H1 (cell line): ENCODE measurements at regions of chr10 and their contacts with region 1.

Region 1: DNA sequence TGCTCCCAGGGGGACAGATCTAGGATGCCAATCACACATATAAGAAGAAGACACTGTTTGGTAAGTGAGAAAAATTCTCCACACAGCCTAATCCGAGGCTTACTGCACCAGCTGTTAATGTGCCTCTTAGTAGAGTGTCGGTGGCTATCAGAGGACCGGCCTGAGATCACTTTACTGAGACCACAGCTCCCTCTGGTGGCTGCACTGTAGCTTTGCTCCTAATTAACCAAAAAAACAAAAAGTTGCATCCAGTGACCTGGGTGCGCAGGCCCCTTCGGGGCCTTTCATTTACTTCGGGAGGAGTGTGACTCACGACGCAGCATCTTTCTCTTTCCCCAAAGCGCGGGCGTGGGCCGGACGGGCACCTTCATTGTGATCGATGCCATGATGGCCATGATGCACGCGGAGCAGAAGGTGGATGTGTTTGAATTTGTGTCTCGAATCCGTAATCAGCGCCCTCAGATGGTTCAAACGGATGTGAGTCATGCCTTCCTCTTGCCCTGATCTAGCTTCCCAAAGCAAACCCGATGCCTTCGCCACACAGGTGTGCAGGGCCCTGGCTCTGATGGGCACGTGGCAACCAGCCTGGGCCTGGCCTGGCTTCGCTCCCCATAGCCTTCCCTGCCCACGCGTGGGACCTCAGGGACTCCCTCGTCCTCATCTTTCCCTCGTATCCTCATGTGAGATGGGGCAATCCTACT is 56.7 kb downstream of the MKI67 start:
- DNase-seq: peak; percentile 19 to 86
- H3K4me3 ChIP-seq: no peak overlapping the region
- H3K27ac ChIP-seq: no peak overlapping the region
- H3K4me1 ChIP-seq: peaks cover 0 to 3% (median 0%) of the 10 kb centered on the region in 4 experiments; a peak in 1 of 7 replicates
- H3K27me3 ChIP-seq: 0 out of 7 replicates have a peak, but pooled peaks cover 0 to 2% (median 0%) of the 10 kb centered on the region in 4 experiments
- CTCF ChIP-seq: peak; percentile 55 to 88 (median 74)
- EP300 ChIP-seq: 0 out of 3 replicates have a peak, but pooled peaks of 1 of the 2 experiments have one; percentile 16
- POLR2A ChIP-seq: no peak
- RAD21 ChIP-seq: peak; percentile 92 to 95

Region 2: DNA sequence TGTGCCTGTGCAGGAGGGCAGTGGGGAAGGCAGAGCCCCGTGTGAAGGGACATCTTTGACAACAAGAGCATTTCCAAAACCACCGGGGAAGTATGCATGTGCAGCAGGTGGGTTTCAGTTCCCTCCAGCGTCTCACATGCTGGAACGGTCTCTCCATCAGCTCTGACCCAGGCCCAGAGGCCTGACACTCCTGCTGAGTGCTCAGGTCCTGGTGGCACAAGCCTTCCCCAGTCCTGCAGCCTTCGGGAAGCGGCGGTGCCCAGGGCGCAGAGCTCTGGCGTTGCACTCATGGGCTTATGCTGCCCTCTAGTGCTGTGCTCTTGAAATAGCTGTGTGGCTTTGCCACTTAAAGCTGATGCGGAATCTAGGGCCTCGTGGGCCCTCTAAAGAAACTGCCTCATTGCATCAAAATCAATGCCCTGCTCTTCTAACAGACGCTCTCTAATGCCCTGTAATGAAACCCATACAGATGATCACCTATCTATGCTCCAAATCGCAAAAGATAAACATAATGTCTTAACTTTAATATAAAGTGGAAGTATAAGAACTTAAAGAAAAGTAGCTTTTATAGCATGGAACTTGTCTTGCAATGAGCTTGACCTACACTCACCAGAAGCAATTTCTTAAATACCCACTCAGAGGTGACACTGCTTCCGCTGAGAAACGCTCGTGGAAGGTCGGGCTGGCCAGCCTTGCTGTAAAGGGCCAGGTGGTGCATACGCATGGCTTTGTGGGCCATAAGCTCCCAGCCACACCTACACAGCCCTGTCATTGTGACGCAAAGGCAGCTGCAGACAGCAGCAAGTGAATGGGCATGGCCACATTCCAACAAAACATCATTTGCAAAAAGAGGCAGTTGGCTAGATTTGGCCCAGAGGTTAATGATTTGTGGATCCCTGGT is 215.4 kb before region 1 on chr10:
- CTCF ChIA-PET with region 1: interaction called, 13 read pairs
- POLR2A ChIA-PET with region 1: no interaction called
- DNase-seq: peak; percentile 51 to 85
- H3K4me3 ChIP-seq: no peak overlapping the region
- H3K27ac ChIP-seq: no peak overlapping the region
- H3K4me1 ChIP-seq: peaks cover 0 to 5% (median 2%) of the 10 kb centered on the region in 4 experiments; a peak in 4 of 7 replicates
- H3K27me3 ChIP-seq: no peaks in the 10 kb centered on the region
- CTCF ChIP-seq: peak; percentile 77 to 93 (median 88)
- EP300 ChIP-seq: no peak
- POLR2A ChIP-seq: no peak
- RAD21 ChIP-seq: peak; percentile 99

Region 3: GRCh38 chr10:127906548-127907377 is 162.7 kb before region 1 on chr10 and contains the start of gene PTPRE:
- CTCF ChIA-PET with region 1: interaction called, 22 read pairs
- POLR2A ChIA-PET with region 1: no interaction called
- DNase-seq: peak; percentile 17 to 88
- H3K4me3 ChIP-seq: peak within 1 kb of the TSS; percentile 36 to 87 (median 54)
- H3K27ac ChIP-seq: no peak within 1 kb of the TSS
- H3K4me1 ChIP-seq: peaks cover 0 to 3% (median 1%) of the 10 kb centered on the region in 4 experiments; a peak in 5 of 7 replicates
- H3K27me3 ChIP-seq: peaks cover 3 to 23% (median 15%) of the 10 kb centered on the region in 4 experiments
- CTCF ChIP-seq: peak; percentile 72 to 94 (median 88)
- EP300 ChIP-seq: no peak
- POLR2A ChIP-seq: no peak
- RAD21 ChIP-seq: peak; percentile 67 to 91
- total RNA-seq, gene PTPRE: 0.54 and 0.69 TPM in 2 replicates

Region 4: GRCh38 chr10:128000471-128001362 is 68.8 kb before region 1 on chr10:
- CTCF ChIA-PET with region 1: no interaction called
- POLR2A ChIA-PET with region 1: no interaction called
- DNase-seq: no peak
- H3K4me3 ChIP-seq: no peak overlapping the region
- H3K27ac ChIP-seq: no peak overlapping the region
- H3K4me1 ChIP-seq: no peaks in the 10 kb centered on the region
- H3K27me3 ChIP-seq: no peaks in the 10 kb centered on the region
- CTCF ChIP-seq: no peak
- EP300 ChIP-seq: no peak
- POLR2A ChIP-seq: no peak
- RAD21 ChIP-seq: no peak

Region 5: GRCh38 chr10:128018236-128018635 is 51.3 kb before region 1 on chr10:
- CTCF ChIA-PET with region 1: interaction called, 18 read pairs
- POLR2A ChIA-PET with region 1: no interaction called
- DNase-seq: no peak
- H3K4me3 ChIP-seq: no peak overlapping the region
- H3K27ac ChIP-seq: no peak overlapping the region
- H3K4me1 ChIP-seq: 0 out of 7 replicates have a peak, but pooled peaks cover 0 to 2% (median 0%) of the 10 kb centered on the region in 4 experiments
- H3K27me3 ChIP-seq: no peaks in the 10 kb centered on the region
- CTCF ChIP-seq: no peak
- EP300 ChIP-seq: no peak
- POLR2A ChIP-seq: no peak
- RAD21 ChIP-seq: no peak

Region 6: DNA sequence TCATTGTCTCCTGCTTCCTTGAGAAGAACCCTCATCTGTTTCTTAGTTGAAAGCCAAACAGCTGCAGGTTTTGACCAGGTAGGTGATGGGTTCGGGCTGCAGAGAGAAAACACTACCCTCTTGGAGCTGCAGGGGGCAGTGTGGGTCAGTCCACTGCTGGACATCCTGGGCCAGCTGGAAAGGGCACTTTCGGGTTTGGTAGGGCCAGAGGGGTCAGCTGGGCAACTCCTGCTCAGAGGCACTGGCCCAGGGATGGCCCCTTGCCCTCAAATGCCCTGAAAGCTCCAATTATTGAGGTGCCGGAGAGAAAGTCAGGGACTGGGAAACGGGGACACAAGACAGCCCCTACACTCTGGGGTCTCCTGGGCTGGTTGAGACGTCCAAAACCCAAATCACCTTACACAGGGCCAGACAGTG is 33.9 kb before region 1 on chr10:
- CTCF ChIA-PET with region 1: interaction called, 52 read pairs
- POLR2A ChIA-PET with region 1: no interaction called
- DNase-seq: peak; percentile 23 to 95
- H3K4me3 ChIP-seq: no peak overlapping the region
- H3K27ac ChIP-seq: no peak overlapping the region
- H3K4me1 ChIP-seq: no peaks in the 10 kb centered on the region
- H3K27me3 ChIP-seq: no peaks in the 10 kb centered on the region
- CTCF ChIP-seq: peak; percentile 75 to 93 (median 90)
- EP300 ChIP-seq: no peak
- POLR2A ChIP-seq: no peak
- RAD21 ChIP-seq: peak; percentile 63 to 80

Region 7: DNA sequence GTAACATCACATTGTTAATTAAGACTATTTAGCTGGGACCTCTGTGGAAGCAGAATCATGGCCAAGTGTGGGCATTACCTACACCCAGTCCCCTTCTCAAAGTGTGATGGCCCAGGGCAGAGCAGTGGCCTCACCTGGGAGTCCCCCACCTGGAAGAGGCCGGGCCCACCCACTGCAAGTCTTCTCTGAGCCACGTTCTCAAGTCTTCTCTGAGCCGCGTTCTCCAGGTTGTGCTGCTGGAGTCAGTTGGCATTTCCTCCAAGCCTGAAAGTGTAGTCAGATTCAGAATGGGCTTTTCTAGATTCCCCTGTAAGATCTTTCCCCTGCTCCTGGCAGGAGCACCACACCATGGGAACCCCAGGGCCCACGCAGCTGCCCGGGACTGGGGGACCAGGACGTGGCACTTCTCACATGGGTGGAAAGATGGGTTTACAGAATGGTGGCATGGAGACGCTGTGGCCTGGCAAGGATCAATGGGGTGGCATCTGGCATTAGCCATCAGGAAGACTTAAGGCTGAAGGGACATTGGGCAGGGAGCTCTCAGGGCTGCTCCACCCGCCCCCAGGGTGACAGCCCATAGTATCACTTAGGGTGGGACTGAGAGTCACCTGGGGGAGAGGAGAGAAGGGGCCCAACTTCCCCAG is 11.3 kb before region 1 on chr10:
- CTCF ChIA-PET with region 1: interaction called, 21 read pairs
- POLR2A ChIA-PET with region 1: interaction called, 3 read pairs
- DNase-seq: no peak
- H3K4me3 ChIP-seq: no peak overlapping the region
- H3K27ac ChIP-seq: no peak overlapping the region
- H3K4me1 ChIP-seq: peaks cover 3 to 12% (median 10%) of the 10 kb centered on the region in 4 experiments; a peak in 6 of 7 replicates
- H3K27me3 ChIP-seq: no peaks in the 10 kb centered on the region
- CTCF ChIP-seq: no peak
- EP300 ChIP-seq: no peak
- POLR2A ChIP-seq: no peak
- RAD21 ChIP-seq: no peak

Region 8: DNA sequence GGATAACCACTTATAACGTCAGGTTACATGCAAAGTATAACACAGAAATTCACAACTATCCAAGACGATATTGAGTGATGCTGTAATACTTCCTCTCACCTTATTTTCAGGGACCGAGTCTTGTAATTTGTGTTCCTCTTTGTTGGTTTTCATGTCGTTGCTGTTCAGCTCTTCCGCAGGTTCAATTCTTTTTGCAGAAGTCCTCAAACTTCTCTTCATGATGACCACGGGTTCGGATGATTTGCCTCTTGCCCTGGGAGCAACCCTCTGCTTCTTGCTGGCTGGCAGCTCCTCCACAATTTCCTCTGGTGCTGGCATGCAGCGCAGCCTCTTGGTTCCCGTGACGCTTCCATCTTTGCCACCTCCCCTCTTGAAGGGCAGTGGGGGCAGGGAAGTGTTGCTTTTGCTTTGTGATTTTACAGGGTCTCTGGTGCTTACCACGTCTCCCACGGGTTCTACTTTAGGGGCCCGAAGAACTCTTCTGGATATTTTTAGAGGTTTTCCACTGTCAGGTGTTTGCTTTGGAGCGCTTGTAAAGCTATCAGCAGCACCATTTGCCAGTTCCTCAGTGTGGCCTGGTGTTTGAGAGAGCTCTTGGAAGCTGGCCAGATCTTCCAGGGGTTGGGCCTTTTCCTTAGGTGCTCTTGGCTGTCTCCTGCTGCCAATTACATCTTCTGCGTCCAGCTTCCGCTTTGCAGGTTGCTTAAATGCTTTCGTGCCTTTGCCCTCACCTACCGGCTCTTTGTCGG is 33.2 kb after region 1 on chr10:
- CTCF ChIA-PET with region 1: no interaction called
- POLR2A ChIA-PET with region 1: no interaction called
- DNase-seq: no peak
- H3K4me3 ChIP-seq: no peak overlapping the region
- H3K27ac ChIP-seq: no peak overlapping the region
- H3K4me1 ChIP-seq: no peaks in the 10 kb centered on the region
- H3K27me3 ChIP-seq: no peaks in the 10 kb centered on the region
- CTCF ChIP-seq: no peak
- EP300 ChIP-seq: no peak
- POLR2A ChIP-seq: no peak
- RAD21 ChIP-seq: no peak